Psoas muscle (tissue), 8 donors: ENCODE measurements at regions of chr16 and their contacts with region 1.

Region 1: GRCh38 chr16:27529962-27530361 is 19.8 kb downstream of the GTF3C1 start:
- DNase-seq: no peak
- ATAC-seq: peak in 2 of 4 donors; percentile 7 to 19
- H3K4me3 ChIP-seq: no peak overlapping the region
- H3K27ac ChIP-seq: peak overlapping the region; percentile 84
- H3K4me1 ChIP-seq: peaks cover 36% of the 10 kb centered on the region
- H3K27me3 ChIP-seq: no peaks in the 10 kb centered on the region
- CTCF ChIP-seq: no peak

Region 2: DNA sequence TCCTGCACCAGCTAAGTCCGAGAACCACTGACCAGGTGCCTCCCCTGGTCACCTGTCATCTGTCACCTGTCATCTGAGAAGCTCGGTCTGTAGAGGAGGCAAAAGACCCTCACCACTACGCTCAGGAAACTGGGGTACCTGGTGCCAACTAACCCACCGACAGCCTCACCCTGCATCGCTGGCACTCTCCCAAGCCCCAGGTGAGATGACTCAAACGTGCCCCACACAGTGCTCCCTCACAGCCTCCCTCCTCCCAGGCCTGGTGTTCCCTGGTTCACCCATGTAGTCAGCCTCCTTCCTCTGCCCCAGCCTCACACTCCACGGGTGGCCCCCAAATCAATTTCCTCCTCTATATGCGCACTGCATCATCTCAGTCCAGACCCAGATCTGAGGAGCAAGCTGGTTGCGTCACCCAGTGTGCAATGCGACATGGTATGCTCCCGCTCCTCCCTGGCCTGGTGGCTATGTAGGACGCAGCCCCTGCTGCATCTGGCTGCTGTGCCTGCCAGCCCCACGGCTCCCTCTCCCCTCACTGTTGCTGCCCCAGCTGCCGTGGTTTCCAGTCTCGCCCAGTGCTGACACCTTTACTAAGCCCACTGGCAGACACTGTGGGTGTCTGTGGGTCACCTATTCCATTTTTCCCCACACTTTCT is 48.6 kb before region 1 on chr16:
- intact Hi-C with region 1: loop called in 1 of 2 experiments (anchors 5 kb)
- DNase-seq: no peak
- ATAC-seq: no peak
- H3K4me3 ChIP-seq: no peak overlapping the region
- H3K27ac ChIP-seq: peak overlapping the region; percentile 76
- H3K4me1 ChIP-seq: peaks cover 24% of the 10 kb centered on the region
- H3K27me3 ChIP-seq: no peaks in the 10 kb centered on the region
- CTCF ChIP-seq: no peak